Dendritic cell treated with granulocyte-macrophage colony-stimulating factor and Interleukin-4, amounts not matched to agents 40 ng/mL and 50 ng/mL, for 4 days (primary cell): ENCODE measurements at regions of chr19 and their contacts with region 1.

Region 1: GRCh38 chr19:52690369-52691214 is 44.3 kb downstream of the ZNF611 start:
- H3K4me3 Mint-ChIP-seq: peak overlapping the region; percentile 78
- H3K27ac Mint-ChIP-seq: peak overlapping the region; percentile 95
- H3K4me1 Mint-ChIP-seq: peaks cover 33% of the 10 kb centered on the region
- H3K27me3 Mint-ChIP-seq: peaks cover 3% of the 10 kb centered on the region

Region 2: GRCh38 chr19:52710538-52710937 is 19.9 kb after region 1 on chr19:
- intact Hi-C with region 1: no loop called
- H3K4me3 Mint-ChIP-seq: no peak overlapping the region
- H3K27ac Mint-ChIP-seq: no peak overlapping the region
- H3K4me1 Mint-ChIP-seq: no peaks in the 10 kb centered on the region
- H3K27me3 Mint-ChIP-seq: no peaks in the 10 kb centered on the region

Region 3: GRCh38 chr19:52734893-52735661 is 44.5 kb after region 1 on chr19 and contains the start of gene ZNF611:
- intact Hi-C with region 1: loop called (anchors 1 kb)
- H3K4me3 Mint-ChIP-seq: peak within 1 kb of the TSS; percentile 78
- H3K27ac Mint-ChIP-seq: peak within 1 kb of the TSS; percentile 91
- H3K4me1 Mint-ChIP-seq: peaks cover 14% of the 10 kb centered on the region
- H3K27me3 Mint-ChIP-seq: no peaks in the 10 kb centered on the region